Ascending aorta (tissue), 2 donors: ENCODE measurements at regions of chr5 and their contacts with region 1.

Region 1: DNA sequence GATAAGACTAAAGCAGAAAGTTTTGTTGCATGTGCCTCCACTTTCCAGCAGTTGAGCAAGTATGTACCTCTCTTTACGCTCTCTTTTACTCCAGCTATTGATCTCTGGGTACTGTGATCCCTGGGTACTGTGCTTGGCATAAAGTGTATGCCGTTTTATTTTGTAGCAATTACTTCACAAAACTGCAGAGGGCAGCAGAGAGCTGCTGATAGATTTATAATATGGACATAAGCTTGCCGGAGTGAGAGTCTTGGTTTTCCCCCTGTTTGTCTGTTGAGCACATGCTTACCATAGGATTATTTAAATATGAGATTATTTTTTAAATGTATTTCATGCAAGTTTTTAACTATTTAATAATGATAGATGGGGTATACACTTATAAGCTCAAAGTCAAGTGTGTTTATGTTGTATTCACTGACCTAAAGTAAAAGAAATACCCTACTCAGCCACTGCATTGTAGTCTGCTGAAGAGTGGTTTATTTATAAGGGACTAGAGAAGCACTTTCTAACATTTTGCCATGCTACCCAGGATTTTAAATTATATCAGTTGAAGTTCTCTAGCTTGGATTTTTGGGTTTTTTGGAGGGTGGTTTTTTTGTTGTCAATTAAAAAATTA is 13.0 kb downstream of the TTC1 start:
- DNase-seq: no peak
- H3K4me3 ChIP-seq: no peak overlapping the region
- H3K27ac ChIP-seq: no peak overlapping the region
- H3K4me1 ChIP-seq: peaks cover 0 to 4% of the 10 kb centered on the region in 2 donors
- H3K27me3 ChIP-seq: no peaks in the 10 kb centered on the region
- CTCF ChIP-seq: peak; percentile 70 to 83 (median 73)

Region 2: DNA sequence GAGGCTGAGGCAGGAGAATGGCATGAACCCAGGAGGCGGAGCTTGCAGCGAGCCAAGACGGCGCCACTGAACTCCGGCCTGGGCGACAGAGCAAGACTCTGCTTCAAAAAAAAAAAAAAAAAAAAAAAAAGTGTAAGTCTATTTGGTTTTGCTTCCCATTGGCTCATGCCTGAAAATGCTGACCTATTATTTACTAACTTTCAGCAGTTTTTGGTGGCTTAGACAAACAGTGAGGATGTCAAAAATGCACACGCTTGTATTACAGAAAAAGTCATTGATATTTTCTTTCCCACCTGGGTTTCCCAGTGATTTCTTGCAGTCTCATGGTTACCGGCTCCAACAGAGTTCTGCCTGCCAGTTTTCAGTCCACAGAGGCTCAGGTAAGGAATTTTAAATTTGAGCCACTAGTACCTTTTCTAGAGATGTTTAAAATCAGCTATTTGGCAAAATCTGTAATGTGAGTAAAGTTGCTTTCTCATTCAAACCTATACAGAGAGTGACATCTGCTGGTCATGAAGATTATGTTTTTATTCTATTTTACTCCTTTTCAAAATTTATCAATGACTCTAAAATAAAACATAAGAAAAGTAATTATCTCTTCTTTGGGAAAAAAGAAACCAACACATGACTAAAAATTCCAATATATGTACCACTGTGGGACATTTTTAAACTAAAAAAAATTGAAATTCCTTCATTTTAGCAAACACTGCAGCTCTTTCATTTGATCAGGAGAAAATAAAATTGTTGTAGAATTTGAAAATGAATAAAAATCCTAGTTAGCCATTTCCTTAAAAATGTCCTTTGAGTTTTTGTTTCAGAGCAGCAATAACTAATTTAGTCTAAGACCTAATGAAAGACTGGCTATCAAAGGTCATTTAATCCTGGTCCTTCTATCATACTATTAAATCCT is 369.1 kb after region 1 on chr5:
- intact Hi-C with region 1: loop called (anchors 1 kb)
- DNase-seq: no peak
- H3K4me3 ChIP-seq: no peak overlapping the region
- H3K27ac ChIP-seq: no peak overlapping the region
- H3K4me1 ChIP-seq: peaks cover 0 to 5% of the 10 kb centered on the region in 2 donors
- H3K27me3 ChIP-seq: no peaks in the 10 kb centered on the region
- CTCF ChIP-seq: peak; percentile 42 to 54 (median 48)